SK-N-SH (cell line): ENCODE measurements at regions of chr16 and their contacts with region 1.

Region 1: DNA sequence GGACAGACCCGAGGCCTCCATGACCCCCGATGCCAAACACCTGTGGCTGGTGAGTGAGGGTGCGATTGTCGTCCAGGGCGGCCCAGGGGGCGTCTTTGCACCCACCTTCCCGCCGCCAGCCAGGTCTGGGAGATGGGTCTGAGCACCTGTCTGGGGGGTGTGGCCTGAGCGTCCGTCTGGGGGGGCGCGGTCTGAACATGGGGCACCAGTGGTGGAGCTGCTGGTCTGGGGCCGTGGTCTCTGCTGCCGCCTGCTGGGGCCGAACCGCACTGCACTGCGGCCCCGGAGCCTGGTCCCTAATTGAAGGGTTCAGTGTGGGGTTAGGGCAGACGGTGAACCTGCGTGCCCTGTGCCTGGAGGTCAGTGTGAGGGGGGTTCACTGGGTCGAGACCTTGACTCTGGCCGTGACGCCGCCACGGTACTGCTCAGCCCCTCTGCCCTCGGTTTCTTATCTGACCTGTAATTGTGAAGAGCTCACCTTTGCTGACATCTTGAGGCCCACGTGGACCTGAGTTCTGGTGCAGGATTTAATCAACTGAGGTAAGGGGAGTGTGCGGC is 12.6 kb upstream of the TCF25 start:
- DNase-seq: peak; percentile 95
- H3K4me3 ChIP-seq: peak overlapping the region in 1 of 2 experiments; percentile 25; a peak in 1 of 4 replicates
- H3K27ac ChIP-seq: no peak overlapping the region
- H3K4me1 ChIP-seq: no peaks in the 10 kb centered on the region
- H3K27me3 ChIP-seq: no peaks in the 10 kb centered on the region
- CTCF ChIP-seq: peak; percentile 95
- EP300 ChIP-seq: no peak
- RAD21 ChIP-seq: peak; percentile 88

Region 2: GRCh38 chr16:89706507-89707263 is 154.1 kb before region 1 on chr16:
- CTCF ChIA-PET with region 1: interaction called, 22 read pairs
- POLR2A ChIA-PET with region 1: no interaction called
- DNase-seq: no peak
- H3K4me3 ChIP-seq: no peak overlapping the region
- H3K27ac ChIP-seq: no peak overlapping the region
- H3K4me1 ChIP-seq: peaks cover 0 to 6% of the 10 kb centered on the region in 2 experiments; a peak in 1 of 4 replicates
- H3K27me3 ChIP-seq: no peaks in the 10 kb centered on the region
- CTCF ChIP-seq: no peak
- EP300 ChIP-seq: no peak
- RAD21 ChIP-seq: no peak

Region 3: GRCh38 chr16:89765292-89765830 is 95.5 kb before region 1 on chr16:
- CTCF ChIA-PET with region 1: interaction called, 25 read pairs
- POLR2A ChIA-PET with region 1: no interaction called
- DNase-seq: no peak
- H3K4me3 ChIP-seq: no peak overlapping the region
- H3K27ac ChIP-seq: no peak overlapping the region
- H3K4me1 ChIP-seq: no peaks in the 10 kb centered on the region
- H3K27me3 ChIP-seq: no peaks in the 10 kb centered on the region
- CTCF ChIP-seq: no peak
- EP300 ChIP-seq: no peak
- RAD21 ChIP-seq: no peak

Region 4: GRCh38 chr16:89795676-89796075 is 65.2 kb before region 1 on chr16:
- CTCF ChIA-PET with region 1: interaction called, 42 read pairs
- POLR2A ChIA-PET with region 1: no interaction called
- DNase-seq: no peak
- H3K4me3 ChIP-seq: no peak overlapping the region
- H3K27ac ChIP-seq: no peak overlapping the region
- H3K4me1 ChIP-seq: peaks cover 0 to 23% of the 10 kb centered on the region in 2 experiments; a peak in 1 of 4 replicates
- H3K27me3 ChIP-seq: no peaks in the 10 kb centered on the region
- CTCF ChIP-seq: no peak
- EP300 ChIP-seq: no peak
- RAD21 ChIP-seq: no peak

Region 5: DNA sequence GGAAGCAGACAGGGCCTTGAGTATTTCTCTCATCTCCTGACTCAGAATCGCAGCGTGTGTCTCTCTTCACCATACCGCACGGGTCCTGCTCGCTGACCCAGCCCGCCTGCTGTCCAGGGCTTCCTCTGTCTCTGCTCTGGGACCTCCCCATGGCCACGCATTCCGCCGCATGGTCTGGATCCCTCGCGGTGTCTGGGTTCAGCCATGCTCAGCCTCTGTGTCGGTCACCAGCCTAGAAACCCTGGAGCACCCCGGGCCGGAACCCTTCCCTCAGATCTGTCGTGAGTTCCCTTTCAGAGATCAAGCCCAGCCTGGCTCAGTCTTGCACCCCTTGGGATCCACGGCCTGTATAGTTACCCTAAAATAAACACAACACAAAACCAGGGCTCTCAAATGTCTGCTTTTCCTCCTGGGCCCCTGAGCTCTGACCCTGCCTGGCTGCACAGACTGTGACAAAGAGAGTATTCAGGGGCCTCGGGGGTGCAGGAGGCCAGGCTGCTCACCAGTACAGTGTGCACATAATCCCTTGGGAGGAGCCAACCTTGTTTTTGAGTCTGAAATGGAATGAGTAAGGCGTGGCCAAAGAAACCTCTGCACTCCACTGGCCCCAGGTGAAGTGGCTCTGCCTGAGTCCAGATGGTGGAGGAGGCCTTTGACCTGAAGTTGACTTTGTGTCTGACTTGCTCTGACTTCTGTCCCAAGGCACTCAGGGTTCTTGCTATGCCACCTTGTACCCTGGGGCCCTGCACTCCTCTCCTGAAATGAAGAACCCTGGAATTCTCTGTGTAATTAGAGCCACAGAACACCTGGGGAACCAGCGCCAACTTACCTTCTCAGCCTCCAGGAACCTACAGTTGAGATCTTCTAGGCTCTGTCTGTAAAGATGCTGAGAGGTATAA is 38.4 kb before region 1 on chr16:
- CTCF ChIA-PET with region 1: interaction called, 36 read pairs
- POLR2A ChIA-PET with region 1: no interaction called
- DNase-seq: no peak
- H3K4me3 ChIP-seq: no peak overlapping the region
- H3K27ac ChIP-seq: no peak overlapping the region
- H3K4me1 ChIP-seq: peaks cover 0 to 4% of the 10 kb centered on the region in 2 experiments; a peak in 1 of 4 replicates
- H3K27me3 ChIP-seq: no peaks in the 10 kb centered on the region
- CTCF ChIP-seq: no peak
- EP300 ChIP-seq: no peak
- RAD21 ChIP-seq: no peak

Region 6: GRCh38 chr16:89842471-89843408 is 18.1 kb before region 1 on chr16:
- CTCF ChIA-PET with region 1: interaction called, 68 read pairs
- POLR2A ChIA-PET with region 1: interaction called, 4 read pairs
- DNase-seq: peak; percentile 88
- H3K4me3 ChIP-seq: 0 out of 4 replicates have a peak overlapping the region, but pooled peaks of 1 of the 2 experiments have one; percentile 9
- H3K27ac ChIP-seq: peak overlapping the region; percentile 41 to 55; a peak in 3 of 4 replicates
- H3K4me1 ChIP-seq: peaks cover 13 to 18% of the 10 kb centered on the region in 2 experiments; a peak in 2 of 4 replicates
- H3K27me3 ChIP-seq: no peaks in the 10 kb centered on the region
- CTCF ChIP-seq: no peak
- EP300 ChIP-seq: peak; percentile 49 to 67; a peak in 3 of 4 replicates
- RAD21 ChIP-seq: no peak